Activated CD4-positive, alpha-beta memory T cell treated with anti-CD3 and anti-CD28 coated beads for 36 hours (primary cell): ENCODE measurements at regions of chr1 and their contacts with region 1.

Region 1: GRCh38 chr1:214328770-214329469 is 48.0 kb downstream of the SMYD2 start:
- DNase-seq: peak; percentile 88
- H3K4me3 Mint-ChIP-seq: no peak overlapping the region
- H3K27ac Mint-ChIP-seq: no peak overlapping the region
- H3K4me1 Mint-ChIP-seq: no peaks in the 10 kb centered on the region
- H3K27me3 Mint-ChIP-seq: no peaks in the 10 kb centered on the region

Region 2: GRCh38 chr1:213244664-213245091 is 1084.2 kb before region 1 on chr1:
- CTCF ChIA-PET with region 1: interaction called, 3 read pairs
- POLR2A ChIA-PET with region 1: no interaction called
- intact Hi-C with region 1: loop called (anchors 2 kb)
- DNase-seq: peak; percentile 10
- H3K4me3 Mint-ChIP-seq: no peak overlapping the region
- H3K27ac Mint-ChIP-seq: no peak overlapping the region
- H3K4me1 Mint-ChIP-seq: no peaks in the 10 kb centered on the region
- H3K27me3 Mint-ChIP-seq: no peaks in the 10 kb centered on the region

Region 3: DNA sequence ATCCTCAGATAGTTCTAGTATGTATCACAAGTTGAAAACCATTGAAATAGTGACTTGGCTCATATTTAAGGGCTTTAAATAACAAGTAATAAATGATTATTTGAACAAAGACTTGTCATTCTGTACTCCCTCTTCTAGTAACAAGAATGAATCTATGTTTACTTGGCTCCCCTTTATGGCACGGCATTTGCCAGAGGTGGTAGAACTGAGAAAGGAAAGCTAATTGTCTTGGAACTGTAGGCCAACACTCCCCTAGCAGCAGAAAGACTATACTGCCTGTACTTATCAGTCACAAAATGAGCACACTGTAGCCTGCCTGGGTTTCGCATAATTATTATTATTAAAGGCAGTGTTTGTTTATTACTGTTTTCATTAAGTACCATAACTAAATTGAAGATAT is 77.6 kb before region 1 on chr1:
- CTCF ChIA-PET with region 1: interaction called, 491 read pairs
- POLR2A ChIA-PET with region 1: no interaction called
- intact Hi-C with region 1: no loop called
- DNase-seq: no peak
- H3K4me3 Mint-ChIP-seq: no peak overlapping the region
- H3K27ac Mint-ChIP-seq: no peak overlapping the region
- H3K4me1 Mint-ChIP-seq: no peaks in the 10 kb centered on the region
- H3K27me3 Mint-ChIP-seq: peaks cover 18% of the 10 kb centered on the region

Region 4: GRCh38 chr1:214281021-214281719 is 47.8 kb before region 1 on chr1 and contains the start of gene SMYD2:
- CTCF ChIA-PET with region 1: interaction called, 34 read pairs
- POLR2A ChIA-PET with region 1: interaction called, 3 read pairs
- intact Hi-C with region 1: no loop called
- DNase-seq: peak; percentile 72
- H3K4me3 Mint-ChIP-seq: peak within 1 kb of the TSS; percentile 86
- H3K27ac Mint-ChIP-seq: peak within 1 kb of the TSS; percentile 77
- H3K4me1 Mint-ChIP-seq: peaks cover 35% of the 10 kb centered on the region
- H3K27me3 Mint-ChIP-seq: no peaks in the 10 kb centered on the region
- total RNA-seq, gene SMYD2: 31.1 to 32.8 TPM

Region 5: GRCh38 chr1:214341932-214342331 is 13.0 kb after region 1 on chr1:
- CTCF ChIA-PET with region 1: interaction called, 46 read pairs
- POLR2A ChIA-PET with region 1: no interaction called
- intact Hi-C with region 1: no loop called
- DNase-seq: no peak
- H3K4me3 Mint-ChIP-seq: no peak overlapping the region
- H3K27ac Mint-ChIP-seq: no peak overlapping the region
- H3K4me1 Mint-ChIP-seq: no peaks in the 10 kb centered on the region
- H3K27me3 Mint-ChIP-seq: no peaks in the 10 kb centered on the region

Region 6: GRCh38 chr1:214566158-214567104 is 237.5 kb after region 1 on chr1:
- CTCF ChIA-PET with region 1: interaction called, 10 read pairs
- POLR2A ChIA-PET with region 1: no interaction called
- intact Hi-C with region 1: no loop called
- DNase-seq: peak; percentile 43
- H3K4me3 Mint-ChIP-seq: no peak overlapping the region
- H3K27ac Mint-ChIP-seq: no peak overlapping the region
- H3K4me1 Mint-ChIP-seq: no peaks in the 10 kb centered on the region
- H3K27me3 Mint-ChIP-seq: peaks cover 19% of the 10 kb centered on the region

Region 7: DNA sequence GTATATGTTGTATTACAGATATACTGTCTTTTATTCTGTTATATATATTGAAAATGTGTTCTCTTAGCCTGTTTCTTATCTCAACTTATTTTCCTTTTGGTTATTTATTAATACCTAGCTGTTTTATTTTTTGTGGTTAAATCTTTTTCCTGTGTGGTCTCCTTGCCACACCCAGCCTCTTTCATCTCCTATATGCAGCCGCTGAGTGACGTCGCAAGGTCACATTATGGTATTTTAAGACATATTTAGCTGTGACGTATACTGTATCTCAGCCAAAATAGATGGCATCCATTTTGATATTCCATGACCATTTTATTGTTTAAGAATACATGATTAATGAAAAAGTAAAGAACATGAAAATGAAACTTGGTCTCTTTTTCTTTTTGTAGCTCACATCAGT is 303.2 kb after region 1 on chr1:
- CTCF ChIA-PET with region 1: interaction called, 35 read pairs
- POLR2A ChIA-PET with region 1: no interaction called
- intact Hi-C with region 1: no loop called
- DNase-seq: peak; percentile 23
- H3K4me3 Mint-ChIP-seq: no peak overlapping the region
- H3K27ac Mint-ChIP-seq: no peak overlapping the region
- H3K4me1 Mint-ChIP-seq: peaks cover 20% of the 10 kb centered on the region
- H3K27me3 Mint-ChIP-seq: no peaks in the 10 kb centered on the region